ENCODE measurements at regions of chr16 and their contacts with region 1.

Region 1: GRCh38 chr16:19086322-19087199 is 19.1 kb downstream of the COQ7 start:
- DNase-seq: peak; percentile 54 to 78 (median 67)
- H3K4me3 ChIP-seq: peak overlapping the region in 1 of 2 donors; percentile 17
- H3K4me3 Mint-ChIP-seq: peak overlapping the region; percentile 17 to 81 (median 50)
- H3K27ac ChIP-seq: no peak overlapping the region
- H3K27ac Mint-ChIP-seq: no peak overlapping the region
- H3K4me1 ChIP-seq: peaks cover 11% of the 10 kb centered on the region
- H3K4me1 Mint-ChIP-seq: peaks cover 0 to 2% (median 0%) of the 10 kb centered on the region in 4 donors
- H3K27me3 ChIP-seq: no peaks in the 10 kb centered on the region
- H3K27me3 Mint-ChIP-seq: peaks cover 1 to 3% of the 10 kb centered on the region in 2 donors

Region 2: GRCh38 chr16:19014461-19014860 is 72.1 kb before region 1 on chr16:
- CTCF ChIA-PET with region 1: no interaction called
- POLR2A ChIA-PET with region 1: no interaction called
- intact Hi-C with region 1: no loop called
- DNase-seq: no peak
- H3K4me3 ChIP-seq: no peak overlapping the region
- H3K4me3 Mint-ChIP-seq: no peak overlapping the region
- H3K27ac ChIP-seq: no peak overlapping the region
- H3K27ac Mint-ChIP-seq: no peak overlapping the region
- H3K4me1 ChIP-seq: no peaks in the 10 kb centered on the region
- H3K4me1 Mint-ChIP-seq: no peaks in the 10 kb centered on the region
- H3K27me3 ChIP-seq: no peaks in the 10 kb centered on the region
- H3K27me3 Mint-ChIP-seq: peaks cover 2 to 6% of the 10 kb centered on the region in 2 donors

Region 3: GRCh38 chr16:19067349-19068236 is 19.0 kb before region 1 on chr16 and contains the start of gene COQ7:
- CTCF ChIA-PET with region 1: interaction called, 10 read pairs
- POLR2A ChIA-PET with region 1: no interaction called
- intact Hi-C with region 1: no loop called
- DNase-seq: peak; percentile 99 to 100 (median 100)
- H3K4me3 ChIP-seq: peak within 1 kb of the TSS; percentile 79 to 99
- H3K4me3 Mint-ChIP-seq: peak within 1 kb of the TSS; percentile 92 to 96 (median 94)
- H3K27ac ChIP-seq: peak within 1 kb of the TSS; percentile 100
- H3K27ac Mint-ChIP-seq: peak within 1 kb of the TSS; percentile 93 to 99 (median 99)
- H3K4me1 ChIP-seq: peaks cover 9% of the 10 kb centered on the region
- H3K4me1 Mint-ChIP-seq: peaks cover 3 to 24% (median 14%) of the 10 kb centered on the region in 4 donors
- H3K27me3 ChIP-seq: no peaks in the 10 kb centered on the region
- H3K27me3 Mint-ChIP-seq: peaks cover 0 to 6% of the 10 kb centered on the region in 2 donors
- total RNA-seq, gene COQ7: 16.2 to 19.2 TPM

Region 4: DNA sequence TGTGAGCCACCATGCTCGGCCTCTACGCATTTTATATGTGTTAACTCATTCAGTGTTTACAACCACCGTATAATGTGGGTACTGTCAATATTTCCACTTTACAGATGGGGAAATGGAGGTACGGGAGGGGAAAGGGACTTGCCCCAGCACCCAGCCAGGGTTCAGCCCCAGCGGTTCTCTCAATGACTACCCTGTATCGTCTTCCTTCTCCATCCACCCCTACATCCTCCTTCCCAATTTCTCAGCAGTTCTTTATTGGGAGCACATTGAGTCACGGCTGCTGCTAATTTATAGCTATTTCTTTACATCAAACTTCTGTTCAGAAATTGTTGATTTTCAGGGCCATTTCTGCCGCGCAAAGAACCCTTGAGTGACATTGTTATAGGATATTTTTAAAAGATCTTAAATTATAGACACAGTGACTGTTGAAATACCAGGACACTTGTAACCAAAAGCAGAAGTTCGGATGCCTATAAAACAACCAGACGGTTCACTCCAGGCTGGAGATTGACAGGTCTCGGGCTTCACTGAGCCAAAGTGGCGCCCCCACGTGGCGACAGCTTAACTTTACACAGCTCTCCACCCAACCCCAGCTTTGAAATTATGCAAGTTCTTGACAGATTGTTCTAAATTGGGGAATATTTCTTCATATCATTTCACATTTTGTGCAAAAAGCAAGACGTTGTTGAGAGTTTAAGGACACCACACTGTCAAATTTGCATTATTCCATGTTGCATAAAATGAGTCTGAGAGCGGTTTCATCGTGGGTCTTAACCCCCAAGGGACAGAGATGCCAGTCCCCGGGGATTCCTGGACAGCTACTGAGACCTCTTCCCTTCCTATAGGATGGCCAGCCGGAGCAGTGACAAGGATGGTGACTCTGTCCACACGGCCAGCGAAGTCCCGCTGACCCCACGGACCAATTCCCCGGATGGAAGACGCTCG is 93.3 kb after region 1 on chr16:
- CTCF ChIA-PET with region 1: interaction called, 26 read pairs
- POLR2A ChIA-PET with region 1: no interaction called
- intact Hi-C with region 1: no loop called
- DNase-seq: peak in 2 of 5 donors; percentile 1 to 5
- H3K4me3 ChIP-seq: no peak overlapping the region
- H3K4me3 Mint-ChIP-seq: no peak overlapping the region
- H3K27ac ChIP-seq: no peak overlapping the region
- H3K27ac Mint-ChIP-seq: no peak overlapping the region
- H3K4me1 ChIP-seq: no peaks in the 10 kb centered on the region
- H3K4me1 Mint-ChIP-seq: no peaks in the 10 kb centered on the region
- H3K27me3 ChIP-seq: no peaks in the 10 kb centered on the region
- H3K27me3 Mint-ChIP-seq: peaks cover 2 to 10% of the 10 kb centered on the region in 2 donors

Region 5: GRCh38 chr16:19375561-19376158 is 289.1 kb after region 1 on chr16:
- CTCF ChIA-PET with region 1: interaction called, 12 read pairs
- POLR2A ChIA-PET with region 1: no interaction called
- intact Hi-C with region 1: no loop called
- DNase-seq: peak in 4 of 5 donors; percentile 7 to 44 (median 15)
- H3K4me3 ChIP-seq: no peak overlapping the region
- H3K4me3 Mint-ChIP-seq: no peak overlapping the region
- H3K27ac ChIP-seq: no peak overlapping the region
- H3K27ac Mint-ChIP-seq: no peak overlapping the region
- H3K4me1 ChIP-seq: peaks cover 9% of the 10 kb centered on the region
- H3K4me1 Mint-ChIP-seq: peaks cover 5 to 11% (median 9%) of the 10 kb centered on the region in 4 donors
- H3K27me3 ChIP-seq: no peaks in the 10 kb centered on the region
- H3K27me3 Mint-ChIP-seq: peaks cover 1% of the 10 kb centered on the region in 2 donors

Region 6: DNA sequence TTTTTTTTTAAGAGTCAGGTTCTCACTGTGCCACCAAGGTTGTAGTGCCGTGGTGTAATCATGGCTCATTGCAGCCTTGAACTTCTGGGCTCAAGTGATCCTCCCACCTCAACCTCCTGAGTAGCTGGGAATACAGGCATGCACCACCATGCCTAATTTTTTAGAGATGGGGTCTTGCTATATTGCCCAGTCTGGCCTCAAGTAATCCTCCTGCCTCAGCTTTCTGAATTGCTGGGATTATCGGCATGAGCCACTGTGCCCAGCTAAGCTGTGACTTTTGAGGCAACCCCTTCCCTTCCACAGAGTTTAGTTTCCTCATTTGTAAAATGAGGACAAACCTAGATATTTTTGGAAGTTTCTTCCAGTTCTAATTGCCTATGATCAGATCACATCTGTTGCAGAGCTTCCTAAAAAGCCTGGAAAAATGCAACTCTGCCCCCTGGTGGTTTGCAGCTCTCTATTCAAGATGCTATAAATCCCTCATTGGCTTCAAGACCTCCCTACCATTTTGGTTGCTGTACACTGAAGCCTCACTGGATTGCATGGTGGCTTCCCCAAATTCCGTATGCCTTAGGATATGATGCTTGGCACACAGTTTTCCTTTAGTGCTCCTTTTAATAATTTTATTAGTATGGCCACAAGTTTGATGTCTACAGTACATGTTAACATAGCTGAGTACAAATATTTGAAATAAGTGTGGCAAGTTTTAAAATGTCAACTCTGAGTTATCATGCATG is 416.0 kb after region 1 on chr16:
- CTCF ChIA-PET with region 1: interaction called, 102 read pairs
- POLR2A ChIA-PET with region 1: interaction called, 4 read pairs
- intact Hi-C with region 1: loop called (anchors 1 kb)
- DNase-seq: peak; percentile 46 to 62 (median 57)
- H3K4me3 ChIP-seq: no peak overlapping the region
- H3K4me3 Mint-ChIP-seq: no peak overlapping the region
- H3K27ac ChIP-seq: no peak overlapping the region
- H3K27ac Mint-ChIP-seq: peak overlapping the region in 1 of 7 donors; percentile 32
- H3K4me1 ChIP-seq: no peaks in the 10 kb centered on the region
- H3K4me1 Mint-ChIP-seq: no peaks in the 10 kb centered on the region
- H3K27me3 ChIP-seq: no peaks in the 10 kb centered on the region
- H3K27me3 Mint-ChIP-seq: no peaks in the 10 kb centered on the region

Region 7: DNA sequence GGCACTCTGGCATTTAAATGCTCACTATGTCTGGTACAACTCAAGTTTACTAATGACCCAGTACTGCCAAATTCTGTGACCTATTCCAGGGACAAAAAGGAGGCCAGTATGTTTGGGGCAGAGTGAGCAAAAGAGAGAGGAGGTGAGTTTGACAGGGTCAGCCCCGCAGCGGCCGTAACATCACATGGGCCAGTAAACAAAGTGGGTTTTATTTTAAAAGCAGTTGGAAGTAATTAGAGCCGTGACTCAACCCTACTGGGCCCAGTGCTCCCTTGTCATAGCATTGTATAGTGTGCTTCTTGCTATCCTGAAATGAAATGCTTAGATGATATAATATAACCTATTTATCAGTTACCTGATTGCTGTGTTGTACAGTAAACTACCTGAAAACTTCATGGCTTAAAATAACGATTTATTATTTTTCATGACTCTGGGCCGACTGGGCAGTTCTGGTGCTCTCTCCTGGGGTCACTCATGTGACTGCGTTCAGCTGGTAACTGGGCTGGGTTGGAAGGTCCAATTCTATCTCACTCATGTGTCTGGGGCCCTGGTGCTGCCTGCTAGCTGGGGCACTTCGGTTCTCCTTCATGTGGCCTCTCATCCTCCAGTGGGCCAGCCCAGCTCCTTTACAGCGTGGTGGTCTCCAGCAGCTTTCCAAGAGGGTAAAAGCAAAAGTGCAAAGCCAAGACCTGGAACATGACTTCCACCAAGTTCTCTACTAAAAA is 658.9 kb after region 1 on chr16:
- CTCF ChIA-PET with region 1: no interaction called
- POLR2A ChIA-PET with region 1: no interaction called
- intact Hi-C with region 1: no loop called
- DNase-seq: no peak
- H3K4me3 ChIP-seq: no peak overlapping the region
- H3K4me3 Mint-ChIP-seq: no peak overlapping the region
- H3K27ac ChIP-seq: no peak overlapping the region
- H3K27ac Mint-ChIP-seq: no peak overlapping the region
- H3K4me1 ChIP-seq: no peaks in the 10 kb centered on the region
- H3K4me1 Mint-ChIP-seq: no peaks in the 10 kb centered on the region
- H3K27me3 ChIP-seq: no peaks in the 10 kb centered on the region
- H3K27me3 Mint-ChIP-seq: no peaks in the 10 kb centered on the region

Region 8: DNA sequence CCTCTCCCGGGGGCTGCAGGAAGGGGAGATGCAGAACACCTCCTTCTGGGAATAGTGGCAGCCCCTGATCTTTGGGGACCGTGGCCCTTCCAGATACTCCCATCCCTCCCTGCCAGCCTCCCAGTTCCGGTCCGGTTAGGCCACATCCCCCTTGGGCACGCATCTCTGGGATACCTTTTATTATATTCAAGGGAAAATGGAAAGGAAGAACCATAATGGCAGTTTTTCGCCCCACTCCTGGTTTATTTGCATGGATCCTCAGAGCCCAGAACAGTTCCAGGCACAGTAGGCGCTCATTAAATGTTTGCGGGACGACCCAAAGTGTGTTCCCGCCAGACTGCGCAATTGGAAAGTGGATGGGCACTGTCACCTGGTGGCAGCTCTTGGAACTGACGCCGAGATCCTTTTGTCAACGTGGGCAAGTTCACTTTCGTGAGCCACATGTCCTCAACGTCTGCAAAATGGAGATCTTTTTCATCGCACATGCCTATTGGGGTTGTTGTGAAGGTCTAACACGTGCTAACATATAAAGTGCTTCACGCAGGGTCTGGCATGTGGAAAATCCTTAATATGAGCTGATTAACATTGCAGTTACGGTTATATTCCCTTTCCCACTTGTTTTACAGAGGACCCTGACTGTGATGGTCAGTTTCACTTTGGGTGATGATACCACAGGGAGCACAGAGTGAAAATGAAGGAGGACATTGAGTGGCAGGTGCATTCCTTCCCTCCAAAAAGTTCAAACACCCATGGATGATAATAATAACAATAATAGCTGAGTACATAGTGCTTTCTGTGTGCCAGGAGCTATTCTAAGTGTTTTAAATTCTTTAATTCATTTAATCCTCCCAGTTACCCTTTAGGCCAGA is 799.7 kb after region 1 on chr16:
- CTCF ChIA-PET with region 1: no interaction called
- POLR2A ChIA-PET with region 1: no interaction called
- intact Hi-C with region 1: loop called (anchors 5 kb)
- DNase-seq: peak; percentile 76 to 79 (median 76)
- H3K4me3 ChIP-seq: peak overlapping the region in 1 of 2 donors; percentile 9
- H3K4me3 Mint-ChIP-seq: peak overlapping the region; percentile 79 to 91 (median 86)
- H3K27ac ChIP-seq: no peak overlapping the region
- H3K27ac Mint-ChIP-seq: peak overlapping the region in 3 of 7 donors; percentile 60 to 89 (median 67)
- H3K4me1 ChIP-seq: peaks cover 24% of the 10 kb centered on the region
- H3K4me1 Mint-ChIP-seq: peaks cover 15 to 30% (median 23%) of the 10 kb centered on the region in 4 donors
- H3K27me3 ChIP-seq: peaks cover 12% of the 10 kb centered on the region
- H3K27me3 Mint-ChIP-seq: peaks cover 7 to 27% of the 10 kb centered on the region in 2 donors